ENCODE measurements at regions of chr5 and their contacts with region 1.

Region 1: DNA sequence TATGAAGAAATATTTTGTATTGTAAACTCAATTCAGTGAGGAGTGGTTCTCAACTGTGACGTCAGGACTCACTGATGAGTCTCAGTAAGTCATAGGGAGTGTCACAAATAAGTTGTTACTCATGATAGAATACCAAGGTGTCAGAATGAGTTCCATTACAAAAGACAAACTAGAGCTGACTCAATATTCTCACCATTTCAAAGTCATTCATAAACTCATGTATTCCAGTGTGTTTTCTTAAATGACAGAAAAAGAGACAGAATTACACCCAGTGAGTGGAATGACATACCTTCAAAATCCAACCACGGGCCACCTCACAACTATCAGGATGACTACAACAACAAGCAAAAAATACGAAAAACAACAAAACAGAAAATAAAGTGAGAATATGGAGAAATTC is 321.5 kb downstream of the ENC1 start:
- DNase-seq: no peak
- ATAC-seq: no peak
- H3K4me3 ChIP-seq: no peak overlapping the region
- H3K27ac ChIP-seq: no peak overlapping the region
- H3K4me1 ChIP-seq: no peaks in the 10 kb centered on the region
- H3K27me3 ChIP-seq: peaks cover 2 to 14% of the 10 kb centered on the region in 2 experiments; a peak in 4 of 5 replicates
- CTCF ChIP-seq: no peak
- EP300 ChIP-seq: no peak
- POLR2A ChIP-seq: no peak
- RAD21 ChIP-seq: no peak

Region 2: DNA sequence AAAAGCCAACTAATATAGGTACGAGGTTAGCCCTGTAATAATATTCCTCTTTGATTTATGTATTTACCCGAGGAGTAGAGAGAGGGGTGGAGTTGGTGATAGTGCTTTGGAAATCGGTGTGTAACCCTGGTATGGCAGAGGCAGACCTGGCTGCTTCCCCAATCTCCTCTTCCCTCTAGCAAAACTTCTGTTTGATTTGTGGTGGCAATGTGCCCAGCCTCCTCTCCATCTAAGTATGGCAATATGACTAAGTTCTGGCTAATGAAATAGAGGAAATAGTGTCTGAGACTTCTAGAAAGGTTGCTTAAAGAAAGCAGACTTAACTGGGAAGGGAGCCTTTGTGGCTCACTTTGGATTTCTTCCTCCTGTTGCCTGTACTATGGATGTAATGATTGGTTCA is 169.7 kb before region 1 on chr5:
- CTCF ChIA-PET with region 1: no interaction called
- POLR2A ChIA-PET with region 1: no interaction called
- in situ Hi-C with region 1: no loop called
- intact Hi-C with region 1: no loop called
- DNase-seq: no peak
- ATAC-seq: no peak
- H3K4me3 ChIP-seq: no peak overlapping the region
- H3K27ac ChIP-seq: no peak overlapping the region
- H3K4me1 ChIP-seq: no peaks in the 10 kb centered on the region
- H3K27me3 ChIP-seq: peaks cover 0 to 11% of the 10 kb centered on the region in 2 experiments; a peak in 2 of 5 replicates
- CTCF ChIP-seq: no peak
- EP300 ChIP-seq: no peak
- POLR2A ChIP-seq: no peak
- RAD21 ChIP-seq: no peak

Region 3: GRCh38 chr5:74342948-74343682 is 24.0 kb after region 1 on chr5:
- CTCF ChIA-PET with region 1: no interaction called
- POLR2A ChIA-PET with region 1: no interaction called
- in situ Hi-C with region 1: no loop called
- intact Hi-C with region 1: loop called (anchors 1 kb)
- DNase-seq: no peak
- ATAC-seq: no peak
- H3K4me3 ChIP-seq: no peak overlapping the region
- H3K27ac ChIP-seq: no peak overlapping the region
- H3K4me1 ChIP-seq: 0 out of 2 replicates have a peak, but pooled peaks cover 6% of the 10 kb centered on the region
- H3K27me3 ChIP-seq: no peaks in the 10 kb centered on the region; a peak in 3 of 5 replicates
- CTCF ChIP-seq: no peak
- EP300 ChIP-seq: no peak
- POLR2A ChIP-seq: no peak
- RAD21 ChIP-seq: no peak

Region 4: DNA sequence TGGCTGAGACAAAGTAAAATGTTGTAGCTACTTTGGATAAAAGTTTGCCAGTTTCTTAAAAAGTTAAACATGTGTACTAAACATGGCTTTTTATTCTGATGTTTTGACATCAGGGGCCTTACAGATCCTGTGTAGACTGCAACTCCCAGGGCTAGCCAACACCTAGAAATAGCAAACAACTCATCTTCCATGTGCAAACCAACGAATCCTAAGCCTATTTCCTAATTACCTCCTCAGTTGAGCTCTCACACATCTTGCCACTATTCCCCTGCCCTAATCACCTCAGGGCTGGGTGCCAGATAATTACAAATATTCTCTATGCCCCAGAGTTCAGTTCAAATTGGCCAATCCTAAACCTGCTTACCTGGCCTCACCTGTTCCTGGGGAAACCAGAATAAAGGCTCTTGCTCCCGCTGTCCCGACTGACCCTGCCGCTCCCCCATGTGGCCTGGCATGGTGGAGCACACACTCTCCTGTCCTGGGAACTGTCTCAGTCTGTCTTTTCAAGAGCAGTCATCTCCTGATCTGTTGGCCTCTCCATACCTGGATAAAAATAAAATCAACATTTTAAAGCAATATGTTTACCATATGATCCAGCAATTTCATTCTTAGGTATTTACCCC is 584.2 kb after region 1 on chr5:
- CTCF ChIA-PET with region 1: no interaction called
- POLR2A ChIA-PET with region 1: no interaction called
- in situ Hi-C with region 1: no loop called
- intact Hi-C with region 1: no loop called
- DNase-seq: peak; percentile 66
- ATAC-seq: peak; percentile 100
- H3K4me3 ChIP-seq: no peak overlapping the region
- H3K27ac ChIP-seq: no peak overlapping the region
- H3K4me1 ChIP-seq: peaks cover 6% of the 10 kb centered on the region; the same call in 1 of the 2 replicates
- H3K27me3 ChIP-seq: no peaks in the 10 kb centered on the region
- CTCF ChIP-seq: peak; percentile 95
- EP300 ChIP-seq: no peak
- POLR2A ChIP-seq: no peak
- RAD21 ChIP-seq: peak; percentile 95

Measured in HepG2 (cell line).